A673 (cell line): ENCODE measurements at regions of chr11 and their contacts with region 1.

Region 1: DNA sequence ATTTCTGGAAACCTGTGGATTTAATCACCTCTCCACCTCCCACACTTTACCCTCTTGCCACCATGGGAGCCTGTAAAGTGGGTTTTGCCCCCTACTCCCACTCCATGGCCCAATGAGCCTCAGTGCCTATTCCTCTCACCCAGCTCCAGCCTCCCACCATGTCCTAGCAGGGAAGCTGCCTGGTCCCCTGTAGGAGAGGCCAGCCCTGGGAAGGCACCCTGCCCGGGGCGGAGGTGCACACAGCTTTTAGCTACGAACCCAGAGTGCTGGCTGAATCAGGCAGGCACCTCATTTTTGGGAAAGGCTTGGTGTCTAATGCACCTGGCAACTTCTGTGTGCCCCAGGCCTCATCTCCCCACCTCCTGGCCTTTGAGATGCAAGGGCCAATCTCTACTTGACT is 35.8 kb upstream of the ALX4 start:
- DNase-seq: no peak
- H3K4me3 ChIP-seq: no peak overlapping the region
- H3K27ac ChIP-seq: no peak overlapping the region
- H3K4me1 ChIP-seq: no peaks in the 10 kb centered on the region
- H3K27me3 ChIP-seq: no peaks in the 10 kb centered on the region
- CTCF ChIP-seq: no peak

Region 2: DNA sequence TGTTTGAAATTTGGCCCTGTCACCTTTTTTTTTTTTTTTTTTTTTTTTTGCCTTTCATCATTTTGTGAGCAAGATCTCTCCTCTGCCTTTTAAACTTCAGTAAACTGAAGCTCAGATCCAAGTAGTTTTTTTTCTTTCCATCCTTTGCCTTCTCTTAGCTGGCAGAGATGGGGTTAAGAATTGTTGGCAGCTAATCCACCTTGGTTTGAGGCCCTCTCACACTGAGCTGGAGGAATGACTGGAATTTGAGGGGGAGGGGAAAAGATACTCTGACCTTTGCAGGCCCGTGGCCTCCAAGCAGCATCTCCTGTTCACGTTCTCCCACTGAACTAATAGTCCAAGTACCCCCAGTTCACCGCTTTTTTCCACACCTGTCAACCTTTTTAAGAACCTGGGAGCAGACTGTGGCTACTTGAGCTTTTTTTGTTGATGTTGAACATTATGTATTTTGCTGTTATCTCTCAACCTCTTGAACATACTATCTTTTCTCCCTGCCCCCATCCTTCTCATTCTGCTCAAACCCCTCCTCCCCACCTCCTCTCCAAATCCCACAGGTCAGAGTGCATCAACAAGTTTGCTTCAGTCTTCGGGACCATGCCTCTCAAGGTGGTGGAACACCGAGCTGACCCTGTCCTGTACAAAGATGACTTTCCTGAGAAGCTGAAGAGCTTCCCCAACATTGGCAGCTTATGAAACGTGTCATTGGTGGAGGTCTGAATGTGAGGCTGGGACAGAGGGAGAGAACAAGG is 102.0 kb before region 1 on chr11:
- CTCF ChIA-PET with region 1: no interaction called
- POLR2A ChIA-PET with region 1: no interaction called
- intact Hi-C with region 1: no loop called
- DNase-seq: peak; percentile 69
- H3K4me3 ChIP-seq: no peak overlapping the region
- H3K27ac ChIP-seq: peak overlapping the region; percentile 18
- H3K4me1 ChIP-seq: peaks cover 32% of the 10 kb centered on the region
- H3K27me3 ChIP-seq: no peaks in the 10 kb centered on the region
- CTCF ChIP-seq: no peak

Region 3: DNA sequence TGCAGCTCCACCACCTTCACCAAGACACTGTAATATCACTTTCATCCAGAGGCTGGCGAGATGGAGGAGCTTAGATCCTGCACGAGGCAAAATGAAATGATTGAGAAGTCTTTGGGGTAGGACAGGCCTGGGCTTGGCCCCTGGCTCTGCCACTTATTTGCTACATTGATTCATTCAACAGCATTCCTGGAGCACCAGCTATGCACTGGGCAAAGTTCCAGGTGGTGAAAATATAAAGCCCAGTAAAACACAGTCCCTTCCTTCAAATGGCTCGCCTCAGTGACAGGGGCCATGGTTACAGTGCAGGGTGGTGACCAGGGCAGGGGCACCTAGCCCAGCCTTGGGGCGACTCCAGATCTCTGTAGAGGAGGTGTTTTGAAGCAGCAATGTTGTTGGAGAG is 55.6 kb before region 1 on chr11:
- CTCF ChIA-PET with region 1: no interaction called
- POLR2A ChIA-PET with region 1: no interaction called
- intact Hi-C with region 1: no loop called
- DNase-seq: no peak
- H3K4me3 ChIP-seq: no peak overlapping the region
- H3K27ac ChIP-seq: peak overlapping the region; percentile 39
- H3K4me1 ChIP-seq: peaks cover 66% of the 10 kb centered on the region
- H3K27me3 ChIP-seq: no peaks in the 10 kb centered on the region
- CTCF ChIP-seq: no peak

Region 4: DNA sequence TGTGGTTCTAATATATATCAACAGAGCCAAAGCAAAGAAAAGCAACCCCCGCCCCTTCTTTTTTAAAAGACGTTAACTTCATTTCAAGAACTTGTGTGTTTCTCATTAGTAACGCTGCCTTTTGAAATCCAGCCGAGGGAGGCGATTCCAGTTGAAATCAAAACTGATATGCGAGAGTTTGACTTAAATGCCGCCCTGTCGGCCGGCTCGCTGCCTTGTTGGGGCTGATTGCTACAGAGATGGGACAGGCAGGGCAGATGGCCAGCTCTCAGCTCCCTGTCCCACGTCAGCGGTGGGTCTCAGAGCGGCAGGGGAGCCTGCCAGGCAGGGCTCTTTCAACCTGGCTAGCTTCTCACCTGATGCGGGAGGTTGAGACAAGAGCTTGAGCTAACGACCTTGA is 16.0 kb after region 1 on chr11:
- CTCF ChIA-PET with region 1: no interaction called
- POLR2A ChIA-PET with region 1: interaction called, 20 read pairs
- intact Hi-C with region 1: no loop called
- DNase-seq: peak; percentile 35
- H3K4me3 ChIP-seq: no peak overlapping the region
- H3K27ac ChIP-seq: no peak overlapping the region
- H3K4me1 ChIP-seq: no peaks in the 10 kb centered on the region
- H3K27me3 ChIP-seq: no peaks in the 10 kb centered on the region
- CTCF ChIP-seq: no peak

Region 5: DNA sequence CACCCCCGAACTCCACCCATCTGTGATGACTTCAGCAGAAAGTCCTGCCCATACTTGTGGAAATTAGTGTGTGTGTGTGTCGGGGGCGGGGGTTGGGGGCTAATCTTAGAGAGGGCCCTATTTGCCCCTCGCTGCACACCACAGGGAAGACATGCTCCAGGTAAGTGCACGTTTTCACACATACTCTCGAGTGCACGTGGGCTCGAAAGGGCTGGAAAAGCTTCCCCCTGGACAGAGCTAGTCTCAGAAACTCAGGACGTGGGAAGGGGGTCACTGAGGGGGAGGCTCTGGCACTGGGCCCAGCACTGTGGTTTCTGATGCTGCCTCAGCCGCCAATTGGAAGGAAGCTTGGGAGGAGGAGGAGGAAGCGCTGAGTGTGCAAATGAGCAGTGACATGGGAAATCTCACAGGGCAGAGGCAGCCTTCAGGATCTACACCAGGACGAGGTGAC is 179.0 kb after region 1 on chr11:
- CTCF ChIA-PET with region 1: no interaction called
- POLR2A ChIA-PET with region 1: no interaction called
- intact Hi-C with region 1: no loop called
- DNase-seq: peak; percentile 44
- H3K4me3 ChIP-seq: no peak overlapping the region
- H3K27ac ChIP-seq: no peak overlapping the region
- H3K4me1 ChIP-seq: peaks cover 17% of the 10 kb centered on the region
- H3K27me3 ChIP-seq: no peaks in the 10 kb centered on the region
- CTCF ChIP-seq: no peak

Region 6: GRCh38 chr11:45371251-45372115 is 1025.7 kb after region 1 on chr11:
- CTCF ChIA-PET with region 1: no interaction called
- POLR2A ChIA-PET with region 1: no interaction called
- intact Hi-C with region 1: no loop called
- DNase-seq: peak; percentile 91
- H3K4me3 ChIP-seq: no peak overlapping the region
- H3K27ac ChIP-seq: no peak overlapping the region
- H3K4me1 ChIP-seq: peaks cover 15% of the 10 kb centered on the region
- H3K27me3 ChIP-seq: no peaks in the 10 kb centered on the region
- CTCF ChIP-seq: peak; percentile 100